ENCODE measurements at regions of chr16 and their contacts with region 1.

Region 1: GRCh38 chr16:80084685-80085084 is 456.1 kb upstream of the DYNLRB2 start:
- DNase-seq: peak; percentile 13 to 50
- ATAC-seq: peak; percentile 67 to 89 (median 78)
- H3K4me3 ChIP-seq: no peak overlapping the region
- H3K27ac ChIP-seq: no peak overlapping the region
- H3K4me1 ChIP-seq: no peaks in the 10 kb centered on the region
- H3K27me3 ChIP-seq: no peaks in the 10 kb centered on the region
- CTCF ChIP-seq: peak; percentile 61

Region 2: DNA sequence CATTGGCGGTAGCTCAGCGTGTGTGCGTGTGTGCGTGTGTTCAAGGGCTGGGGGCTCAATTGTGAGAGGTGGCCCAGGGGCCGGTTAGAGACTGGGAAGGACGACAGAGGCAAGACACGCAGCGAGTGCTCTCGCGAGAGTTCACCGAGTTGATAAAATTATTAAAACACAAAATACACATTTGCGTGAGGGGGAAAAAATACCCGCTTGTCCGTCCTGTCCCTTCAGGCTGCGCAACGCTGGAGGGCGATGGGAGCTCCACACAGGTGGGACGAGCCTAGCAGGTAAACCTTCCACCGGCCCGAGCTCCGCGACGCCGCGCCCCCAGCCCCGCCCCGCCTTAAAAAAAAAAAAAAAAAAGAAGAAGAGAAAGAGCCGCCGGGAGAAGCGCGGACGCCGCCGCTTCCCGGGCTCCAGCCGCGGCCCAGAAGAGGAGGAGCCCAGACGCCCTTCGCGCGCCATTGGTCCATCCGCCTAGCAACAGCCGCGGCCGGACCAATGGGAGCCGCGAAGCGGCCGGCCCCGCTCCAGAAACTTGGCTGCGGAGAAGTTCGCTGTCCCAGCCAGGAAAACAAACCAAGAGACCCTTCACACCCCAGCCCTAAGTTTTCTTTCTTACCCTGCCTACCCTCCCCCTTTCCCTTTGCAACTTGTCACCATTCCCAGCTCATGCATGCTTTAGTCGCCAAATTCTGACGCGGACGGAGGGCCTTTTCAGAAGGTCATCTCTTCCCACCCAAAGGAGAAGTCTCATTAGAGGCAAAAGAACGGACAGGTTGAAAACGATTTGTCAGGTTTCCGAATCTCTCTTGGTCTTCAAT is 314.2 kb before region 1 on chr16:
- intact Hi-C with region 1: loop called in 1 of 2 experiments (anchors 10 kb)
- DNase-seq: peak; percentile 90 to 94
- ATAC-seq: peak; percentile 98 to 100 (median 98)
- H3K4me3 ChIP-seq: peak overlapping the region; percentile 69
- H3K27ac ChIP-seq: peak overlapping the region; percentile 19
- H3K4me1 ChIP-seq: peaks cover 12% of the 10 kb centered on the region
- H3K27me3 ChIP-seq: no peaks in the 10 kb centered on the region
- CTCF ChIP-seq: no peak

Measured in psoas muscle (tissue), 8 donors.